CD4-positive, alpha-beta memory T cell (primary cell): ENCODE measurements at regions of chr7 and their contacts with region 1.

Region 1: DNA sequence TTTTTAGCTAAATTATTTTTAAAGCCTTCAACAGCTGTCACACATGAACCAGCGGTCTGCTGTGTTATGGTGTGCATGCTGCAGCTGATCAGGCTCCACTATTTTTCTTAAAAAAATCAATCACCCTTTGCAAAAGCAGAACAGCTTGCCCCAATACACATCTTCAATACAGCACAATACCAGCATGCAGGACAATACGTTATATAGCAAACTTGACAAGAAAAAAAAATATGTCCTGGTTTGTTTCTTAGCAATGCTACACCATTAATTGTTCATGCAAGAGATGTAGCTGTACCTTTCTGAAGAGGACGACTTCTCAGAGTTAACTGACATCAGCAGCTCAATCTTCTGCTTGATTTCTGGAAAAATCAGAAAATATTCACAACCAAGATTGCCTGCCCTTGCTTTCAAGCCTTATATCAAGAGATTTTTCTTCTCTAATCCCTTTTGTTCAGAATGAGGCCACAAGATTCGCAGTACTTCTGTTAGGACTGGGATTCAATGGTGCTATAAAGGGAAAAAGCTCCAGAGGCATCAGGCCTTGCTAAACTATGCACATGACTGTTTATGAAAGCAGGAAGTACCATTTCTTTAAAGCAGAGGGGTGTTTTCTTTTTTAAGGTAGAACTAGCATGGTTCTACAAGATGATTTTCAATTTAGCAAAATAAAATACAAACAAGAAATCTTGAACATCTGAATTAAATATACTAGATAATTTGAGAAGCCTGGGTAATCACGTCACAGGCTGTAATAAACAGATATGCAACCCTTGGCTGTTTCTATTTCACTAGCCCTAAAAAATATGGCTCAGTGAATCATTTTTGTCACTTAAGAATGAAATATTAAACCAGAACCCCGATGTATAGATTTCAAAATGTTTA is 120.0 kb downstream of the SRPK2 start:
- DNase-seq: peak in 4 of 5 donors; percentile 36 to 50 (median 42)
- H3K4me3 ChIP-seq: peak overlapping the region; percentile 52 to 70
- H3K4me3 Mint-ChIP-seq: peak overlapping the region; percentile 82 to 97 (median 90)
- H3K27ac ChIP-seq: peak overlapping the region; percentile 64
- H3K27ac Mint-ChIP-seq: peak overlapping the region; percentile 87 to 93 (median 91)
- H3K4me1 ChIP-seq: peaks cover 54% of the 10 kb centered on the region
- H3K4me1 Mint-ChIP-seq: peaks cover 42 to 72% (median 61%) of the 10 kb centered on the region in 4 donors
- H3K27me3 ChIP-seq: no peaks in the 10 kb centered on the region
- H3K27me3 Mint-ChIP-seq: no peaks in the 10 kb centered on the region

Region 2: DNA sequence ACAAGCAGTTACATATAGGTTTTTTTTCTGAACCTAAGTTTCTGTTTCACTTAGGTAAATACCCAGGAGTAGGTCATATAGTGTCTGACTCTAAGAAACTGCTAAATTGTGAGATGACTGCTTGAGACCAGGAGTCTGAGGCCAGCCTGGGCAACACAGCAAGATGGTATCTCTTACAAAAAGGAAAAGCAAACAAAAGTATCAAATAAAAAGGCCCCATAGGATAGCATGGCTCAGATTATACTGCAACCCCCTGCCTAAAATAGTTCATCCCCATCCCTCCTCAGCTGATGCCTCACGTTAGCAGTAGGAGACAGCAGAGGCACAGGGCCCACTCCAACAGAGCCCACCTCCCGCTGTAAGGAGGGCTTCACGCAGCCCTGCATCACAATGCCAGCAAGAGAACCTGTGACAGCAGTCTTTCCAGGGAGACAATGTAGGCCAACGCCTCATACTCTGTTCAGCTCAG is 29.7 kb after region 1 on chr7:
- CTCF ChIA-PET with region 1: no interaction called
- POLR2A ChIA-PET with region 1: interaction called, 21 read pairs
- intact Hi-C with region 1: loop called (anchors 2 kb)
- DNase-seq: peak in 3 of 5 donors; percentile 12 to 17 (median 14)
- H3K4me3 ChIP-seq: no peak overlapping the region
- H3K4me3 Mint-ChIP-seq: peak overlapping the region; percentile 11 to 80 (median 66)
- H3K27ac ChIP-seq: peak overlapping the region; percentile 12
- H3K27ac Mint-ChIP-seq: peak overlapping the region; percentile 80 to 92 (median 87)
- H3K4me1 ChIP-seq: peaks cover 60% of the 10 kb centered on the region
- H3K4me1 Mint-ChIP-seq: peaks cover 42 to 66% (median 53%) of the 10 kb centered on the region in 4 donors
- H3K27me3 ChIP-seq: no peaks in the 10 kb centered on the region
- H3K27me3 Mint-ChIP-seq: no peaks in the 10 kb centered on the region

Region 3: GRCh38 chr7:105304040-105304895 is 35.5 kb after region 1 on chr7:
- CTCF ChIA-PET with region 1: interaction called, 3 read pairs
- POLR2A ChIA-PET with region 1: interaction called, 21 read pairs
- intact Hi-C with region 1: loop called (anchors 2 kb)
- DNase-seq: no peak
- H3K4me3 ChIP-seq: no peak overlapping the region
- H3K4me3 Mint-ChIP-seq: peak overlapping the region in 5 of 8 donors; percentile 22 to 60 (median 56)
- H3K27ac ChIP-seq: no peak overlapping the region
- H3K27ac Mint-ChIP-seq: peak overlapping the region in 5 of 7 donors; percentile 5 to 83 (median 30)
- H3K4me1 ChIP-seq: peaks cover 73% of the 10 kb centered on the region
- H3K4me1 Mint-ChIP-seq: peaks cover 53 to 79% (median 64%) of the 10 kb centered on the region in 4 donors
- H3K27me3 ChIP-seq: no peaks in the 10 kb centered on the region
- H3K27me3 Mint-ChIP-seq: no peaks in the 10 kb centered on the region

Region 4: GRCh38 chr7:105352018-105352612 is 83.4 kb after region 1 on chr7:
- CTCF ChIA-PET with region 1: no interaction called
- POLR2A ChIA-PET with region 1: no interaction called
- intact Hi-C with region 1: loop called (anchors 2 kb)
- DNase-seq: peak; percentile 81 to 87 (median 82)
- H3K4me3 ChIP-seq: no peak overlapping the region
- H3K4me3 Mint-ChIP-seq: peak overlapping the region; percentile 78 to 89 (median 84)
- H3K27ac ChIP-seq: peak overlapping the region; percentile 49
- H3K27ac Mint-ChIP-seq: peak overlapping the region; percentile 80 to 97 (median 96)
- H3K4me1 ChIP-seq: peaks cover 84% of the 10 kb centered on the region
- H3K4me1 Mint-ChIP-seq: peaks cover 47 to 74% (median 59%) of the 10 kb centered on the region in 4 donors
- H3K27me3 ChIP-seq: no peaks in the 10 kb centered on the region
- H3K27me3 Mint-ChIP-seq: no peaks in the 10 kb centered on the region